A549 (cell line): ENCODE measurements at regions of chr1 and their contacts with region 1.

Region 1: DNA sequence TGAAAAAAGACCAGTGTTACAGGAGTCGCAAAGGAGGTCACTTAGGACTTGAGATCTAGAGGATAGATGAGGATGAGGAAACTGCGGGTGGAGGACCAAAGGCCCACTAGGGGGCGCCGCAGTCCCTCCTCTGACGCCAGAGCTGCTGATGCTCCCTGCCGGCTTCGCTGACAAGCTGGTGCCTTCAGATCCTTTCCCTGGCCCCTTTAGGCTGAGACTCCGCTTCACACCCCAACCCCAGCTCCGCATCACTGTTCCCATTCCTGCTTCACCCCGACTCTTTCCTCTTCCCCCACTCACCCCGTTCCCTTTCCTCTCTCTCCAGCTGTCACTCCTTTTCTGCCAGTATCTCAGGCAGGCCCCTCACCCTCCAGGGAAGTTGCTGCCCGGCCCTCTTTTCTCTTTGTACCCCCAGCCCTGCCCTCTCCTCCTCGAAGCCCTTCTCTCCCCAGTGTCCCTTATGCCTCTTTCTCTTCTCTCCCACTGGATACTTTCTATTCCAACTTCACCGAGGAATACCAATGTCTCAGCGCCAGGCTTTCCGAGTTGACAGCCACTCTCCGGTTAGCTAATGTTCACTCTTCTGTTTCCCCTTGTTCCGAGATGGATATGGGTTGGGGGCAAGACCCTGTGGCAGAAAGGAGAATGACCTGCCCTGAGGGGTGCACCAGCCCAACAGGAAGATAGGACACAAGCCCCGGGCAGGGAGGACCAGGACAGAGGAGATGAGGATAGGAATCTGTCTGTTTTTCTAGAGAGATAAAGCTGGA is 4.5 kb downstream of the KCNJ9 start:
- DNase-seq: peak; percentile 83 to 94
- ATAC-seq: peak; percentile 72 to 88
- H3K4me3 ChIP-seq: no peak overlapping the region
- H3K27ac ChIP-seq: no peak overlapping the region
- H3K4me1 ChIP-seq: 0 out of 3 replicates have a peak, but pooled peaks cover 2% of the 10 kb centered on the region
- CTCF ChIP-seq: peak; percentile 82
- EP300 ChIP-seq: no peak
- POLR2A ChIP-seq: no peak
- RAD21 ChIP-seq: peak; percentile 70 to 72

Region 2: DNA sequence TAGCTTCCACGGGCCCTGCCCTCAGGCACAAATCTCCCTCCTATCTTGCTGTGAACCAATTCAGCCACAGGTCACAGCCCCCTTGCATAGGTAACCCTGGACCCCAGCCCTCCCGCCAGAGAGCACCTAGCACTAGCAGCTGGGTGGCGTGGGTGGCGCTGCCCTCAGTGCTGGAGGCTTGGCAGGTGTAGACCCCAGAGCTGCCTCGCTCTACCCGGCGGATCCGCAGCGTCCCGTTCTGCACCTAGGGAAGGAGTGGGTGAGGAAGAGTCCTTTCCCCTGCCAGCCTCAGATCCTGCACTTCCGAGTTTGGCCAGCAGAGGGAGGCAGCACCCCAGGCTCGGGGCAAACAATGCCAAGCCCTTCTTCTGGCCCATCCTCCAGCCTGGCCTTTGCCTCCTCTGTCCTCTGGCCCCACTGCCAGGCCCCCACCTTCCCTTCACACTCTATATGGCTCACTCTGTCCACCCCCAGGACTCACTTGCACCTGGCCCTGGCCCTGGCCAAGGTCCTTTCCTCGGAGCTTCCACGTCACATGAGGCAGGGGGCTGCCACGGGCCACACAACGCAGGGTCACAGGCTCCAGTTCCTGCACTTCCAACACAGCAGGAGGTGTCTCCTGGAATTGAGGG is 149.5 kb before region 1 on chr1:
- CTCF ChIA-PET with region 1: interaction called, 11 read pairs
- POLR2A ChIA-PET with region 1: no interaction called
- DNase-seq: peak; percentile 59 to 84
- ATAC-seq: peak; percentile 76 to 91
- H3K4me3 ChIP-seq: no peak overlapping the region
- H3K27ac ChIP-seq: peak overlapping the region in 1 of 2 experiments; percentile 43; a peak in 3 of 6 replicates
- H3K4me1 ChIP-seq: peaks cover 20% of the 10 kb centered on the region
- CTCF ChIP-seq: peak; percentile 89
- EP300 ChIP-seq: no peak
- POLR2A ChIP-seq: no peak
- RAD21 ChIP-seq: peak; percentile 90 to 93

Region 3: DNA sequence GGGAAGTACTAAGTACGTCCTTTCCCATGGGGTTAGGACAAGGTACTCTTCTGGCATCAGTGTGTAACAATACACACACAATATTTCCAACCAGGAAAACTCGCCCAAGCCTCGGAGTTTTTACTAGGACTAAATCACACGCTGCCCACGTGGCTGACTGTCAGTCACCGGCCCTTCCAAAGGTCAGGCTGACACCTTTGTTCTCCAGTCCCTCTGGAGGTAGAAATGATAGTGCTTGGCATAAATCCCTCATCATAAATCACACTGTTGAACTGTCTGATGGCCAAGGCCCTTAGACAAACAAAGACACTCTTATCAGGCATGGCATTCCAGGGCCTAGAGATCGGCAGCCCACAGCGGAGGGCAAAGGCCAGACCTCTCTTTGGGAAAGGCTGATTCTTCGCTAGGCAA is 114.9 kb before region 1 on chr1:
- CTCF ChIA-PET with region 1: no interaction called
- POLR2A ChIA-PET with region 1: no interaction called
- DNase-seq: peak in 1 of 2 experiments; percentile 58
- ATAC-seq: peak; percentile 60 to 85; a peak in 5 of 6 replicates
- H3K4me3 ChIP-seq: no peak overlapping the region
- H3K27ac ChIP-seq: no peak overlapping the region
- H3K4me1 ChIP-seq: peaks cover 14% of the 10 kb centered on the region
- CTCF ChIP-seq: no peak
- EP300 ChIP-seq: no peak
- POLR2A ChIP-seq: no peak
- RAD21 ChIP-seq: no peak

Region 4: GRCh38 chr1:159999204-159999603 is 86.7 kb before region 1 on chr1:
- CTCF ChIA-PET with region 1: no interaction called
- POLR2A ChIA-PET with region 1: no interaction called
- DNase-seq: no peak
- ATAC-seq: no peak
- H3K4me3 ChIP-seq: no peak overlapping the region
- H3K27ac ChIP-seq: no peak overlapping the region
- H3K4me1 ChIP-seq: peaks cover 10% of the 10 kb centered on the region; the same call in 2 of the 3 replicates
- CTCF ChIP-seq: no peak
- EP300 ChIP-seq: no peak
- POLR2A ChIP-seq: no peak
- RAD21 ChIP-seq: no peak

Region 5: DNA sequence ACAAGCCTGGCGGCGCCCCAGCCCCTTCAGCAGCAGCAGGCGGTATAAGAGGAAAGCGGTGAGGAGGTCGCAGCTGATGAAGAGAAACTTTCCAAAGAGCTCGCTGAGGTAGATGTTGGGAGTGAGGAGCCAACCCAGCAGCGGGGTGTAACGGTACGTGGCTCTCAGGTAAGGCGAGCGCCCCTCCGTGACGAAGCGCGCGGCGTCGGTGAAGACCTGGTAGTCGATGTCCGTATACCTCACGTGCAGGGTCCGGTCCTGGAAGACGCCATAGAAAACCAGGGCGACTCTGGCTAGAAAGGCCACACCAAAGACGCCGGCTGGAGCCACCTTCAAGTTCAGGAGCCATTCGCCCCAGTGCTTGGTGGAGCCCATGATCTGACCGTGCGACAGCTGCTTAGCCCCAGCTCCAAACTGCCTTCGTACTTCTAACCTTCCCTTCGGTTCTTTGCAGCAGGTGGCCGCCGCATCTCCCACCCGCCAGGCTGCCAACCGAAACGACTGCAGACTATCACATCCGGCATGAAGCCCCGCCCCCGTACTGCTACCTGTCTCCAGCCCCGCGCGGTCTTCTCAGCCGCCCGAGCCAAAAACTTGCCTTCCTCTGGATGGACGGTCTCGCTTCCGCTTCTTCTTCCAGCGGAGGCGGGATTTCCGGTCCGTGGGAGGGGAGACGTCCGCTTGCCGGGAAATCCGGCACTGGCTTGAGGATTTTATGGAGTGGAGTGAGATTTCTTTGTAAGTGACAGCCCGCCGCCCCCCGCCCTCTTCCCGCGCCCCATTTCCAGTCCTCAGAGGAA is 54.3 kb before region 1 on chr1 and contains the start of gene PIGM:
- CTCF ChIA-PET with region 1: interaction called, 258 read pairs
- POLR2A ChIA-PET with region 1: no interaction called
- DNase-seq: peak; percentile 91 to 96
- ATAC-seq: peak; percentile 96 to 98
- H3K4me3 ChIP-seq: peak within 1 kb of the TSS; percentile 95
- H3K27ac ChIP-seq: peak within 1 kb of the TSS; percentile 83 to 84
- H3K4me1 ChIP-seq: peaks cover 12% of the 10 kb centered on the region
- CTCF ChIP-seq: no peak
- EP300 ChIP-seq: no peak
- POLR2A ChIP-seq: peak; percentile 48
- RAD21 ChIP-seq: no peak
- polyA plus RNA-seq, gene PIGM: 6.3 and 7.2 TPM in 2 replicates

Region 6: GRCh38 chr1:160046494-160047110 is 39.3 kb before region 1 on chr1:
- CTCF ChIA-PET with region 1: interaction called, 409 read pairs
- POLR2A ChIA-PET with region 1: no interaction called
- DNase-seq: peak; percentile 26 to 75
- ATAC-seq: peak; percentile 73 to 91
- H3K4me3 ChIP-seq: 0 out of 3 replicates have a peak overlapping the region, but pooled peaks have one; percentile 17
- H3K27ac ChIP-seq: no peak overlapping the region
- H3K4me1 ChIP-seq: peaks cover 8% of the 10 kb centered on the region; the same call in 2 of the 3 replicates
- CTCF ChIP-seq: peak; percentile 72
- EP300 ChIP-seq: no peak
- POLR2A ChIP-seq: no peak
- RAD21 ChIP-seq: peak; percentile 67 to 71

Region 7: DNA sequence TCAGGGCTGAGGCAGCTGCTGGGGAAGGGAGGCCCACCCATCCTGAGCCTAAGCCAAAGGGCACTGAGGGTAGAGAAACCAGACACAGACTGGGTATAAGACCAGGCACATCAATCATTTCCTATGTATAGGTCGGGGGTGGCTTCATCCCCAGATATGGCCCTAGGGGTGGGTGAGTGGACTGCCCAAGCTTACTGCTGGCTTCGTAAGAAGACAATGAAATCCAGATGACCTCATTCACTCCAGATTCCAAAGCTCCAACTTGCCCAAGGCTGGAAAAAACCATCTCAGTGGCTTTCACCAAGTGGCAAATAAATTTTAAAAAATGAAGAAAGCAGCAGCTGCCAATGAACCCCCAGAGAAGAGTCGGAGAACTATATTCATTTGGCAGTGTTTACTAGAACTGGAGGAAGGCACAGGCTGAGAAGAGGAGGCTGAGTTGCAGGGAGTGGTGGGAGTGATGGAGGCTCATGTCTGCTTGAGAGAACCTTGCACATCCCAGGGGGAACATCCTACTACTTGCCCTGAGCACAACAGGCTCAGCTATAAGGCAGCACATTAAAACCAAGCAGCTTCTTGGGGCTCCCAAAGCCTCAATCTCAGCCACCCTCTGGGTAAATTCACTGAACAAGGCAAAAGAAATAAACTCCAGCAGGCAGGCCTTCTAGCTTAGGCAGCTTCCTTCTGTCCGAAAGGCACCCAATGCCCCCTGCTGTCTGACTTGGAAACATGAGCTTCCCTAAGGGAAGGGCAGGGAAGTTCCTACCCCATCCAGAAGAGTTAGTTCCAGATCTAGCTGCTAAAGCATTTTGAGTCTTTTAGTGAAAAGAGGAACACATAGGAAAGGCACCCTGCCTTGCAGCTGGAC is 133.4 kb after region 1 on chr1:
- CTCF ChIA-PET with region 1: interaction called, 21 read pairs
- POLR2A ChIA-PET with region 1: no interaction called
- DNase-seq: peak; percentile 55 to 70
- ATAC-seq: peak; percentile 87 to 88
- H3K4me3 ChIP-seq: no peak overlapping the region
- H3K27ac ChIP-seq: 0 out of 6 replicates have a peak overlapping the region, but pooled peaks of 1 of the 2 experiments have one; percentile 5
- H3K4me1 ChIP-seq: peaks cover 19% of the 10 kb centered on the region; the same call in 2 of the 3 replicates
- CTCF ChIP-seq: peak; percentile 61
- EP300 ChIP-seq: no peak
- POLR2A ChIP-seq: no peak
- RAD21 ChIP-seq: peak; percentile 72 to 74

Region 8: DNA sequence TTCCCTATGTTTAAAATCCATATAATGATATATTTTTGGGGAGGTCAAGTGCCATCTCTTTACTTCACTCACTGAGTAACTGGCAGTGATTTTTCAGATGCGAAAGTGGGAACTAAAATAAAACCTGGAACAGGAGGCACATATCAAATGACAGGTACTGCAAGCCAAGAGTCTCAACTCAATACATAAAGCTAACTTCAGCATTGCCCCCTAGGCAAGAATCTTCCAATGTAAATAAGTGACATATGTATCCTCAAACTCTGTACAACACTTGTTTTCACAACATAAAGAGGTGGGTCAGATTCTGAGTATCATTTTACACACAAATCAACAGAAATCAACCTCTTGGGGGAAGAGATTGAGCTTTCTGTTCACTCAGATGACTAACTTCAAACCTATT is 158.3 kb after region 1 on chr1:
- CTCF ChIA-PET with region 1: interaction called, 15 read pairs
- POLR2A ChIA-PET with region 1: no interaction called
- DNase-seq: no peak
- ATAC-seq: no peak
- H3K4me3 ChIP-seq: no peak overlapping the region
- H3K27ac ChIP-seq: no peak overlapping the region
- H3K4me1 ChIP-seq: peaks cover 16% of the 10 kb centered on the region
- CTCF ChIP-seq: no peak
- EP300 ChIP-seq: no peak
- POLR2A ChIP-seq: no peak
- RAD21 ChIP-seq: no peak

Region 9: DNA sequence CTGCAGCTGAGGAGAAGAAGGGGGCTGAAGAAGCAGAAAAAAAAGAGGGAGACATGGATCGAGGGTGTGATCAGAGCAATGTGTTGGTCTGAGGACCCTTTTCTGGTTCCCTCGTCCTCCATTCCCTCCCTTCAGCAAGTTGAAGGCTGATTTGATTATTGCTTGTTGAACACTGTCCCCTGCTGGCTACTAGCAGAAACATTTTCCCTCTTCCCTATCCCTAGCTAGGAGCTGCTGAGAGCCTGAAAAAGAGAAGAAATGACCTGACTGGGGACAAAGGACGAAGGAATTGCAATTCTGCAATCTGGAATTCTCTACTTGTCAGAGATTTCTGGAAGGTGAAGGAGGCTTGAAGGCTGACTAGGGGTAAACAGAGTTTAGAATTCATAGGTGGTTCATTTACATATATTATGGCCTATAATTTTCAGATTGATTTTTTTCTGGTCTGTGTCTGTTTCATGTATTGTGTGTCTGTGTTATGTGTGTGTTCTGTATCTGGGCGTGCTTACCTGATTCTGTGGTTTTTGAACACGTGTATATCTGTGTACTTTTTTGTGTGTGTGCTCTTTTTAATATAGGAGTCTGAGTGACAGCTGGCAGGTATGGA is 290.8 kb after region 1 on chr1:
- CTCF ChIA-PET with region 1: interaction called, 19 read pairs
- POLR2A ChIA-PET with region 1: no interaction called
- DNase-seq: peak; percentile 65 to 76
- ATAC-seq: peak; percentile 80 to 93
- H3K4me3 ChIP-seq: no peak overlapping the region
- H3K27ac ChIP-seq: no peak overlapping the region
- H3K4me1 ChIP-seq: no peaks in the 10 kb centered on the region
- CTCF ChIP-seq: peak; percentile 96
- EP300 ChIP-seq: no peak
- POLR2A ChIP-seq: no peak
- RAD21 ChIP-seq: peak; percentile 84 to 94